H1 (cell line): ENCODE measurements at regions of chr6 and their contacts with region 1.

Region 1: GRCh38 chr6:133837801-133838349 is 51.0 kb upstream of the TCF21 start:
- DNase-seq: peak; percentile 87 to 93
- H3K4me3 ChIP-seq: peak overlapping the region; percentile 40 to 68 (median 50)
- H3K27ac ChIP-seq: peak overlapping the region; percentile 49; the same call in 1 of the 2 replicates
- H3K4me1 ChIP-seq: peaks cover 0 to 2% (median 0%) of the 10 kb centered on the region in 4 experiments; a peak in 2 of 7 replicates
- H3K27me3 ChIP-seq: no peaks in the 10 kb centered on the region
- CTCF ChIP-seq: peak; percentile 87 to 94 (median 91)
- EP300 ChIP-seq: no peak
- POLR2A ChIP-seq: peak in 1 of 2 experiments; percentile 51; a peak in 1 of 3 replicates
- RAD21 ChIP-seq: peak; percentile 68 to 79

Region 2: DNA sequence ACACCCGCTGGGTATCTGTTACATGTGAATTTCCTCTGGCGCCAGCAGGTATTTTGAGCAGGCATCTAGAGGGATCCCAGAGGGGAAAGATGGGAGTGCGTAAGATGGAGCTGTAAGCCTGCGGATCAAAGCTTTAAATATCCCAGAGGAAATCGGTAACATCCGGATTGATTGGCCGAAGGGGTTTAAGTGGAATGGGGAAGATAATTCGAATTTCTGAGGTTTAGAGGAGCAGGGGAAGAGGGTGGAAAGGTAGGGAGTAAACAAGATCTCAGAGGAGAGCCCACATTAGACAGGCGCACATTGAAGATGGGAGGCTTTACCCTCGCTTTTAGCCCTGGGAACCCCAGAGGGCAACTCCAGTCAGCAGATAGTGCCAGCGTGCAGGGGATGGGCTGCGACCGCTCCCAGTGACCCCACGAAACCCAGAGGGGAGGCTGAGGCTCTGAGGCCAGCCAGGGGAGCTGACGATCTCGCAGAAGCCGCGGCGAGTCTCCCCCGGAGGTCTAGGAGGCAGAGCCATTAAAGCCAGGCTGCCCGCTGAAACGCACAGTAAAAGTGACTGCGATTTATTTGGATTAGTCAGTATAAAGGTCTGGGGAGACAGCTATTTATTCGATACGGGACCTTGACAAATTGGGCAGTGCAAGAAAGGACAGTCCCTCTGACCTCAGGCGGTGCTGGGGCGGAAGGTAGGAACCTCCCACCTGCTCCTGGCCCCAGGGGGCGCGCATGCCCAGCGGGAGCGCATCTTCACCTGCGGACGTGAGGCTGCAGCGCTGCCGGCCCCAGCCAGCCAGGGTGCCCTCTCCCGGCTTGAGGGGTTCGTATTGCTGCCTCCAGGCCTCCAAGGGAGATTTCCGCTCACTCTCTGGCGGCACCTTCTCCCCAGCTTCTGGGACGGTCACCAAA is 16.7 kb after region 1 on chr6:
- CTCF ChIA-PET with region 1: interaction called, 10 read pairs
- POLR2A ChIA-PET with region 1: interaction called, 3 read pairs
- DNase-seq: peak in 1 of 2 experiments; percentile 74
- H3K4me3 ChIP-seq: peak overlapping the region; percentile 62 to 71 (median 65)
- H3K27ac ChIP-seq: no peak overlapping the region
- H3K4me1 ChIP-seq: peaks cover 0 to 9% (median 2%) of the 10 kb centered on the region in 4 experiments; a peak in 4 of 7 replicates
- H3K27me3 ChIP-seq: peaks cover 2 to 34% (median 23%) of the 10 kb centered on the region in 4 experiments
- CTCF ChIP-seq: no peak
- EP300 ChIP-seq: no peak
- POLR2A ChIP-seq: no peak
- RAD21 ChIP-seq: no peak; a peak in 1 of 4 replicates

Region 3: GRCh38 chr6:133891149-133891926 is 53.5 kb after region 1 on chr6:
- CTCF ChIA-PET with region 1: interaction called, 10 read pairs
- POLR2A ChIA-PET with region 1: interaction called, 3 read pairs
- DNase-seq: peak in 1 of 2 experiments; percentile 72
- H3K4me3 ChIP-seq: peak overlapping the region; percentile 18 to 59 (median 36); a peak in 7 of 8 replicates
- H3K27ac ChIP-seq: no peak overlapping the region
- H3K4me1 ChIP-seq: peaks cover 3 to 20% (median 8%) of the 10 kb centered on the region in 4 experiments; a peak in 6 of 7 replicates
- H3K27me3 ChIP-seq: peaks cover 56 to 90% (median 78%) of the 10 kb centered on the region in 4 experiments
- CTCF ChIP-seq: no peak
- EP300 ChIP-seq: no peak
- POLR2A ChIP-seq: no peak
- RAD21 ChIP-seq: no peak